ENCODE measurements at regions of chr14 and their contacts with region 1.

Region 1: GRCh38 chr14:24271134-24271833 is at the start of gene RABGGTA:
- DNase-seq: peak; percentile 85 to 99 (median 91)
- ATAC-seq: peak; percentile 84
- H3K4me3 ChIP-seq: peak within 1 kb of the TSS; percentile 81 to 90
- H3K4me3 Mint-ChIP-seq: peak within 1 kb of the TSS; percentile 91
- H3K27ac ChIP-seq: peak within 1 kb of the TSS; percentile 93 to 97
- H3K27ac Mint-ChIP-seq: peak within 1 kb of the TSS; percentile 98
- H3K4me1 ChIP-seq: peaks cover 31% of the 10 kb centered on the region
- H3K4me1 Mint-ChIP-seq: peaks cover 36% of the 10 kb centered on the region
- H3K27me3 ChIP-seq: no peaks in the 10 kb centered on the region
- H3K27me3 Mint-ChIP-seq: no peaks in the 10 kb centered on the region
- CTCF ChIP-seq: peak; percentile 50
- total RNA-seq, gene RABGGTA: 59.1 to 65.9 TPM

Region 2: DNA sequence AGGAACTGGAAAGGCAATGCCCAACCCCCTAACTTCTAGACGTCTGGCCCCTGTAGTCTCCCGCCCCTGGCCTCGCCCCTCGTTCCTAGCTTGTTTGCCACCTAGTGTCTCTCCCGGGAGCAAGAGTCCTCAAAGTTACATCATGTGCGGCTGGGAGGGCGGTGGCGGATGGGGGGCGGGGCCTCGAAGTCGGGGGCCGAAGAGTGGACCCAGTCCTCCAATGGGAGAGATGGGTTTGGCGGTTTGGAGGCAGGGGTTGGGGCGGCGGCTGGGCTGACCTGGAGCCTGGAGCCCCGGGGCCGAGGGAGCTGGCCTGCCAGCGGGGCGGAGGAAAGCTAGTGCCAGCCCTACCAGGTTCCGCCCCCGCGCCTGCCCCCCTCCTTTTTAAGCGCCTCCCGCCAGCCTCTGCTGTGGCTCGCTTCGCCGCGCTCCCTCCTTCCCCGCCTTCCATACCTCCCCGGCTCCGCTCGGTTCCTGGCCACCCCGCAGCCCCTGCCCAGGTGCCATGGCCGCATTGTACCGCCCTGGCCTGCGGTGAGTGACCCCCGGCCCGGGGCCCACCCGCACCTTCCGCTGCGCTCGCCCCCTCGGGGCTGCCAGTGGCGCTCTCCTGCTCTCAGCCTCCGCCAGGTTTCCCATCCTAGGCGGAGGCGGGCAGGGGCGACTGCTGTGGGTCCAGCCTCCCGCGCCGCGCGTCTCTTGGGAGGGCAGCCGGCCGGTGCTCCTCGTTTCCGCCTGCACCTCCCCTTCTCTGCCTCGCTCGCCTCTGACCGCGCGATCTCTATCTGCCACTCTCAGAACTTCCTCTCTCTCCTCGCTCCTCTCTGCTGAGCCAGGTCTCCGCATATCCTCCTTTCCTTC is 177.2 kb before region 1 on chr14 and contains the start of gene PCK2:
- CTCF ChIA-PET with region 1: no interaction called
- POLR2A ChIA-PET with region 1: no interaction called
- intact Hi-C with region 1: no loop called
- DNase-seq: peak; percentile 39 to 82 (median 68)
- ATAC-seq: peak; percentile 79
- H3K4me3 ChIP-seq: peak within 1 kb of the TSS; percentile 69 to 99
- H3K4me3 Mint-ChIP-seq: peak within 1 kb of the TSS; percentile 98
- H3K27ac ChIP-seq: peak within 1 kb of the TSS; percentile 69 to 76
- H3K27ac Mint-ChIP-seq: peak within 1 kb of the TSS; percentile 98
- H3K4me1 ChIP-seq: peaks cover 19% of the 10 kb centered on the region
- H3K4me1 Mint-ChIP-seq: peaks cover 37% of the 10 kb centered on the region
- H3K27me3 ChIP-seq: no peaks in the 10 kb centered on the region
- H3K27me3 Mint-ChIP-seq: no peaks in the 10 kb centered on the region
- CTCF ChIP-seq: no peak
- total RNA-seq, gene PCK2: 4.9 to 5.2 TPM

Region 3: GRCh38 chr14:24188251-24189058 is 82.8 kb before region 1 on chr14 and contains the start of gene IPO4:
- CTCF ChIA-PET with region 1: no interaction called
- POLR2A ChIA-PET with region 1: interaction called, 4 read pairs
- intact Hi-C with region 1: loop called in 1 of 2 experiments (anchors 1 kb)
- DNase-seq: peak; percentile 86 to 99 (median 94)
- ATAC-seq: peak; percentile 91
- H3K4me3 ChIP-seq: peak within 1 kb of the TSS; percentile 77 to 82
- H3K4me3 Mint-ChIP-seq: peak within 1 kb of the TSS; percentile 89
- H3K27ac ChIP-seq: peak within 1 kb of the TSS; percentile 61 to 89
- H3K27ac Mint-ChIP-seq: peak within 1 kb of the TSS; percentile 87
- H3K4me1 ChIP-seq: peaks cover 17% of the 10 kb centered on the region
- H3K4me1 Mint-ChIP-seq: peaks cover 38% of the 10 kb centered on the region
- H3K27me3 ChIP-seq: no peaks in the 10 kb centered on the region
- H3K27me3 Mint-ChIP-seq: no peaks in the 10 kb centered on the region
- CTCF ChIP-seq: no peak
- total RNA-seq, gene IPO4: 69.2 to 75.6 TPM

Region 4: DNA sequence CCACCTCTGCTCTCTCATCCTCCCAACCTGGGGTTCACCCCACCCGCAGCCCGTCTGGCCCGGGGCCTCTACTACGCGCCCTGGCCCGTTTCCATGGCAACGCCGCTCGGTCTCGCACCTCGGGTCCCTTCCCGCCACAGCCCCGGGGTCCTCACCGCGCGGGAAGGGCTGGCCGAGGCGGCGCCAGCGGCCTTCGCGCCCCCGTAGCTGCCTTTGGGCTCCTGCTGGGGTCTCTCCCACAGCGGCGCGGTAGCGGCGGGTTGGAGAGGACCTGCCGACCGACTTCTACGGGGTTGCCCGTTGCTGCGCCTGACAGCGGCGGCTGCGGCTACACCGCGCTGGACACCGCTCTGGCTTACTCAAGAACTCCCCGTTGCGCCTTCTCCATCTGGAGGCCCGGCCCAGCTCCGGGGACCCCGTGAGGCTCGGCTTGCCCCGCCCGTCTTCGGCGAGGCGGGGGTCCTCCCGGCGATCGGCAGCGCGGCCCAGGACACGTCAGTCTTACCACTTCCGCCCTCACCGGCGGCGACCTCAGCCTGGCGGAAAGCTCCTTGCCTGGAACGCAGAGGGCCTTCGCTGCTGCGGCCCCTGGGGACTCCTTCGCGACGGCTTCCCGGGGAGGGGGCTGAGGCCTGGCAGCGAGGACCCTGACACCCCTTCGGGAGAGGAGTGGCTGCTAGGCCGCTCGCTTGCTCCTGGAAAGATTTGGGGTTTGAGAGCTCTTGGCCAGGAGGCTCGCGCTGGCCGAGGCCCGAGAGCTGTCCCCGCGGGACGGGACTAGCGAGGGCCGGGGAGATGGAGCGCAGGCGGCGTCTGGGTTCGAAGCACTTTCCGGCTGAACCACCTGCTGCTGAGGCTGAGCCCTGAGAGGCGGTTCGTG is 75.9 kb before region 1 on chr14 and contains the start of gene TM9SF1:
- CTCF ChIA-PET with region 1: no interaction called
- POLR2A ChIA-PET with region 1: no interaction called
- intact Hi-C with region 1: loop called in 1 of 2 experiments (anchors 1 kb)
- DNase-seq: peak; percentile 81 to 96 (median 91)
- ATAC-seq: peak; percentile 83
- H3K4me3 ChIP-seq: peak within 1 kb of the TSS; percentile 87 to 94
- H3K4me3 Mint-ChIP-seq: peak within 1 kb of the TSS; percentile 94
- H3K27ac ChIP-seq: peak within 1 kb of the TSS; percentile 99 to 100
- H3K27ac Mint-ChIP-seq: peak within 1 kb of the TSS; percentile 98
- H3K4me1 ChIP-seq: peaks cover 31% of the 10 kb centered on the region
- H3K4me1 Mint-ChIP-seq: peaks cover 50% of the 10 kb centered on the region
- H3K27me3 ChIP-seq: no peaks in the 10 kb centered on the region
- H3K27me3 Mint-ChIP-seq: no peaks in the 10 kb centered on the region
- CTCF ChIP-seq: no peak
- total RNA-seq, gene TM9SF1: 17.5 to 20.4 TPM

Region 5: DNA sequence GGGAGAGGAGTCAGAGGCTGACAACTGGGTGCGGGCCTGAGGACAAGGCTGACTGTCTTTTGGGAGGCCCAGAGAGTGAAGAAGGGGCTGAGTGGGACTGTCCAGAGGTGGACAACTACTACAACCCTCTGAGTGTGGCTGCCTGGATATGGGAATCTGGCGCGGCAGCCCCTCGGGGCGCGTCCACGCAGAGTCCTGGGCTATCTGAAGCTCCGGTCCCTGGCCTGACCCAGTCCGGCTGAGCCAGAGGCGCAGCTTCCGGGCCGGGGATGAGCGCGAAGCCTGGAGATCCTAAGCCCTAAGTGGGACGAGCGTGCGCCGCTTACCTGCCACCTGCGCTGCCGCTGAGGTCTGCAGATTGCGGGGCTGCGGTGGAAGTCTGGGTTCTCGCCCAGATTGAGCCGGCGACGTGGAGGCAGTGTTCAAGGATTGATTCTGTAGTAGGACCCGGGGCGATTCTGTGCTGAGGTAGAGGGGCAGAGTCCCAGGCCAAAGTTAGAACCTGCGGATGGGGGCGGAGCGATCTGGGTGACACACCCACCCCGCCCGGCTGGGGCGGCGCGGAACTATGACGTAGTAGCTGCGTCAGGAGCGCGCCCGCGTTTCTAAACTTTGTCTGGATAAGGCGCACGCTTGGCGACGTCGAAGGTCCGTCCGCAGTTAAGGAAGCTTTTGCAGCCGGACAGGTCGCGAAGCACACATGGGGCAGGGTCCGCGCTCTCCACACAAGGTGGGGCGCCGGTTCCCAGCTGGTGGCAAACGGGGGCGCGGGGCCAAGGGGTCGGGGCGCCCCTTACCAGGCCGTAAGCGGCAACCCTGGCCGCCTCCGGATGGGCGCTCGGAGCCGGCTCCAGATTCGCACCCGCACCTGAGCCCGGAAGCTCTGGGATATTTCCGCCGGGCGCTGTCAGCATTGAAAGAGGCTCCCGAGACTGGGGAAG is 28.2 kb after region 1 on chr14 and contains the starts of genes DHRS1 and NOP9:
- CTCF ChIA-PET with region 1: interaction called, 14 read pairs
- POLR2A ChIA-PET with region 1: interaction called, 20 read pairs
- intact Hi-C with region 1: loop called (anchors 1 kb)
- DNase-seq: peak; percentile 82 to 98 (median 92)
- ATAC-seq: peak; percentile 78
- H3K4me3 ChIP-seq: peak within 1 kb of the TSS; percentile 80 to 83
- H3K4me3 Mint-ChIP-seq: peak within 1 kb of the TSS; percentile 94
- H3K27ac ChIP-seq: peak within 1 kb of the TSS; percentile 80 to 85
- H3K27ac Mint-ChIP-seq: peak within 1 kb of the TSS; percentile 96
- H3K4me1 ChIP-seq: peaks cover 28% of the 10 kb centered on the region
- H3K4me1 Mint-ChIP-seq: peaks cover 51% of the 10 kb centered on the region
- H3K27me3 ChIP-seq: no peaks in the 10 kb centered on the region
- H3K27me3 Mint-ChIP-seq: no peaks in the 10 kb centered on the region
- CTCF ChIP-seq: no peak
- total RNA-seq, gene DHRS1: 24.3 to 28.5 TPM
- total RNA-seq, gene NOP9: 35.6 to 35.8 TPM

Region 6: DNA sequence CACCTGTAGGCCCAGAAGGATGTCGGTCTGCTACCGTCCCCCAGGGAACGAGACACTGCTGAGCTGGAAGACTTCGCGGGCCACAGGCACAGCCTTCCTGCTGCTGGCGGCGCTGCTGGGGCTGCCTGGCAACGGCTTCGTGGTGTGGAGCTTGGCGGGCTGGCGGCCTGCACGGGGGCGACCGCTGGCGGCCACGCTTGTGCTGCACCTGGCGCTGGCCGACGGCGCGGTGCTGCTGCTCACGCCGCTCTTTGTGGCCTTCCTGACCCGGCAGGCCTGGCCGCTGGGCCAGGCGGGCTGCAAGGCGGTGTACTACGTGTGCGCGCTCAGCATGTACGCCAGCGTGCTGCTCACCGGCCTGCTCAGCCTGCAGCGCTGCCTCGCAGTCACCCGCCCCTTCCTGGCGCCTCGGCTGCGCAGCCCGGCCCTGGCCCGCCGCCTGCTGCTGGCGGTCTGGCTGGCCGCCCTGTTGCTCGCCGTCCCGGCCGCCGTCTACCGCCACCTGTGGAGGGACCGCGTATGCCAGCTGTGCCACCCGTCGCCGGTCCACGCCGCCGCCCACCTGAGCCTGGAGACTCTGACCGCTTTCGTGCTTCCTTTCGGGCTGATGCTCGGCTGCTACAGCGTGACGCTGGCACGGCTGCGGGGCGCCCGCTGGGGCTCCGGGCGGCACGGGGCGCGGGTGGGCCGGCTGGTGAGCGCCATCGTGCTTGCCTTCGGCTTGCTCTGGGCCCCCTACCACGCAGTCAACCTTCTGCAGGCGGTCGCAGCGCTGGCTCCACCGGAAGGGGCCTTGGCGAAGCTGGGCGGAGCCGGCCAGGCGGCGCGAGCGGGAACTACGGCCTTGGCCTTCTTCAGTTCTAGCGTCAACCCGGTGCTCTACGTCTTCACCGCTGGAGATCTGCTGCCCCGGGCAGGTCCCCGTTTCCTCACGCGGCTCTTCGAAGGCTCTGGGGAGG is 39.6 kb after region 1 on chr14 and contains the start of gene LTB4R:
- CTCF ChIA-PET with region 1: interaction called, 27 read pairs
- POLR2A ChIA-PET with region 1: interaction called, 5 read pairs
- intact Hi-C with region 1: loop called in 1 of 2 experiments (anchors 5 kb)
- DNase-seq: peak; percentile 41 to 89 (median 68)
- ATAC-seq: peak; percentile 80
- H3K4me3 ChIP-seq: peak within 1 kb of the TSS; percentile 52 to 57
- H3K4me3 Mint-ChIP-seq: peak within 1 kb of the TSS; percentile 75
- H3K27ac ChIP-seq: peak within 1 kb of the TSS; percentile 63 to 78
- H3K27ac Mint-ChIP-seq: peak within 1 kb of the TSS; percentile 90
- H3K4me1 ChIP-seq: peaks cover 62% of the 10 kb centered on the region
- H3K4me1 Mint-ChIP-seq: peaks cover 72% of the 10 kb centered on the region
- H3K27me3 ChIP-seq: no peaks in the 10 kb centered on the region
- H3K27me3 Mint-ChIP-seq: no peaks in the 10 kb centered on the region
- CTCF ChIP-seq: no peak
- total RNA-seq, gene LTB4R: 15.4 to 16.7 TPM

Region 7: DNA sequence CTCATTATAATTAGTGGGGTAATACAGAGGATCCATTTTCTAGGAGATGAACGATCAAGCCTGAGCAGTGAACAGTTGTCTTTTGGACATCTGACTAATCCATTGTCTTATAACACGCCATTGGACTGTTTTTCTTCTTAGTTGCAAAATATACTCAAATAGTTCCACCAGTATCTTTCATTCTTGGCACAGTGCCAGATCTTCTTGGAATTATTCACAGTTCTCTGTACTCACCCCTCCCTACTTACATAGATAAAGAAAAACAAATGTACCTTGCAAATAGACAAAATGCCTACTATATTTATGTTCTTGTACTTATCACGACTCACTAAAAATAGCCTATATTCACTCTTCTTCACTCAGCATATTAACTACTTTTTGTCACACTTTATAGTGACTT is 154.4 kb after region 1 on chr14:
- CTCF ChIA-PET with region 1: interaction called, 13 read pairs
- POLR2A ChIA-PET with region 1: interaction called, 8 read pairs
- intact Hi-C with region 1: loop called in 1 of 2 experiments (anchors 1 kb)
- DNase-seq: peak in 1 of 9 experiments; percentile 23
- ATAC-seq: no peak
- H3K4me3 ChIP-seq: no peak overlapping the region
- H3K4me3 Mint-ChIP-seq: no peak overlapping the region
- H3K27ac ChIP-seq: no peak overlapping the region
- H3K27ac Mint-ChIP-seq: peak overlapping the region; percentile 0
- H3K4me1 ChIP-seq: peaks cover 29% of the 10 kb centered on the region
- H3K4me1 Mint-ChIP-seq: peaks cover 30% of the 10 kb centered on the region
- H3K27me3 ChIP-seq: peaks cover 0 to 2% of the 10 kb centered on the region in 2 experiments
- H3K27me3 Mint-ChIP-seq: no peaks in the 10 kb centered on the region
- CTCF ChIP-seq: no peak

Region 8: DNA sequence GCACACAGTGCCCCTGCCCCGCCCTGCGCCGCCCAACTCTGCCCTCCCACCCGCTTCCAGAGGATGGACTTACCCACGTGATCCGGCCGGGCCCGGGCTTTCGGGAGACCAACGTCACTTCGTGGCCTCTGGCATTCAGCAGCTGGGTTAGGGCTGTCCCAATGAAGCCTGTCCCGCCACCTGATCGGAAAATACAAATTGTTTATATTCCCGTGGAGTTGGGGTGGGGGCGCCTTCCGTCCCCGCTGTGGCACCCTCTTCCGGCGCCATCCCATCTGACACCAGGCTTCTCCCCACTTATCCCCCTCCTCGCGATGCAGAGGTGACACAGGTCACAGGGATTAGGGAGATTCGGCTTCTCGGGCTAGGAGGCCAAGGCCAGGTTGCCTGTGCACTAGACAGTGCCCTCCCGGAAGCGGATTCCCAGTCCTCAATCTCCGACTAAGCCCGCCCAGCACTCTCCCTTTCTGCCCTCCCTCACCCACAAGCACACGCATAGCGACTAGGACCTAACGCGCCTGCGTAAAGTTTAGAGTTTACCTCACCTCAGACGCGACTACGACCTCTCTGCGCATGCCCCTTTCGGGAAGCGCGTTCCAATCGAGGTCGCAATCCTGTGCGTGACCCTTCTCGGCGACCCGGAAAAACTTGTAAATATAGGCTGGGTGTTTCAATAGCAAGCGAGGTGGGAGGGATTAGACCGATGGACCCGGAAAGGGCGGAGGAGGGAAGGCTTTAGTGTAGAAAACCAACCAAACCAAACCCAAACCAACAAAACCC is 171.2 kb after region 1 on chr14 and contains the start of gene SDR39U1:
- CTCF ChIA-PET with region 1: no interaction called
- POLR2A ChIA-PET with region 1: interaction called, 4 read pairs
- intact Hi-C with region 1: loop called (anchors 1 kb)
- DNase-seq: peak; percentile 93 to 100 (median 95)
- ATAC-seq: peak; percentile 89
- H3K4me3 ChIP-seq: peak within 1 kb of the TSS; percentile 77 to 89
- H3K4me3 Mint-ChIP-seq: peak within 1 kb of the TSS; percentile 95
- H3K27ac ChIP-seq: peak within 1 kb of the TSS; percentile 96
- H3K27ac Mint-ChIP-seq: peak within 1 kb of the TSS; percentile 97
- H3K4me1 ChIP-seq: peaks cover 35% of the 10 kb centered on the region
- H3K4me1 Mint-ChIP-seq: peaks cover 45% of the 10 kb centered on the region
- H3K27me3 ChIP-seq: no peaks in the 10 kb centered on the region
- H3K27me3 Mint-ChIP-seq: no peaks in the 10 kb centered on the region
- CTCF ChIP-seq: no peak
- total RNA-seq, gene SDR39U1: 75.0 to 84.4 TPM

Measured in CD8-positive, alpha-beta T cell (primary cell).